ENCODE measurements at regions of chr2 and their contacts with region 1.

Region 1: GRCh38 chr2:223797811-223798721 is 39.3 kb downstream of the AP1S3 start:
- DNase-seq: peak in 18 of 42 donors; percentile 20 to 70 (median 40)

Region 2: GRCh38 chr2:222973237-222973636 is 824.8 kb before region 1 on chr2:
- intact Hi-C with region 1: loop called (anchors 5 kb)
- DNase-seq: no peak

Region 3: GRCh38 chr2:223692191-223692947 is 105.7 kb before region 1 on chr2:
- intact Hi-C with region 1: loop called (anchors 10 kb)
- DNase-seq: peak in 41 of 42 donors; percentile 14 to 85 (median 57)

Measured in head of caudate nucleus (tissue), 42 donors.